ENCODE measurements at regions of chr2 and their contacts with region 1.

Region 1: GRCh38 chr2:203782262-203782976 is 76.0 kb downstream of the CD28 start:
- DNase-seq: peak; percentile 75 to 78
- H3K4me3 ChIP-seq: no peak overlapping the region
- H3K4me3 Mint-ChIP-seq: peak overlapping the region; percentile 37
- H3K27ac Mint-ChIP-seq: peak overlapping the region; percentile 96
- H3K4me1 ChIP-seq: peaks cover 44% of the 10 kb centered on the region
- H3K4me1 Mint-ChIP-seq: peaks cover 27% of the 10 kb centered on the region
- H3K27me3 ChIP-seq: no peaks in the 10 kb centered on the region
- H3K27me3 Mint-ChIP-seq: no peaks in the 10 kb centered on the region
- CTCF ChIP-seq: peak; percentile 68

Region 2: DNA sequence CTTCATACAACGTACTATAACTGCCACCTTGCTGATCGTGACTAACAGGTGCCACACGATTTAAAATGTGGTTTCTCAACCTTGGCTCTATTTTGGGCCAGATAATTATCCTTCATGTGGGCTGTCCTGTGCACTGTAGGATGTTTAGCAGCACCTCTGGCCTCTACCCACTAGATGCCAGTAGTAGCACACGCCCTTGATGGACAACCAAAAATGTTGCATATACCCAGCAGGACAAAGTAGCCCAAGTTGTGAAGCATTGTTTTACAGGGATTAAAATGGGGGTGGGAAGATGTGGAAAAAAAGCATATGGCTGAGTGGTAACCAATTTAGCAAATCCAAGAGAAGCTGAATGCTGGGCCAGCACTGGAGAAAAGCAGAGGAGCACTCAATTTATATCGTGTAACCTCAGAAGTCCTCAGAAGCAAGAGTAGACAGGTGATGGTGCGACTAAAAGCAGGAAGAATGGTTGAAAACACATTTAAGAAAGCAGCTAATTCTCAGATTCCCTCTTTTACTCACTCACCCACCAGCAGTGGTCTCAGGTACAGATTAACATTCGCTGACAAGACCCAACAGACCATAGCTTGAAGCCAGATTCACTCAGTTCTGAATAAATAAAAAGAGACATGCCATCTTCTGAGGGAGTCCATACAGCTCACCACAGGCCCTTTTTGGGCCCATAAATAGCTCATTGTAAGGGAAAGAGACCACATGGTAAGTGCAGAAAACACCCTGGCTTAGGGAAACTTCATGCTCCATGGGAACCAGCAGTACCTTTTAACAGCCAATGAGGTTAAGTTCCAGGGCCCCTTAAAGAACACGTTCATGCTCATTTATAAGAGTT is 297.9 kb before region 1 on chr2:
- CTCF ChIA-PET with region 1: no interaction called
- POLR2A ChIA-PET with region 1: no interaction called
- intact Hi-C with region 1: loop called (anchors 1 kb)
- DNase-seq: peak; percentile 39 to 41
- H3K4me3 ChIP-seq: no peak overlapping the region
- H3K4me3 Mint-ChIP-seq: no peak overlapping the region
- H3K27ac Mint-ChIP-seq: no peak overlapping the region
- H3K4me1 ChIP-seq: no peaks in the 10 kb centered on the region
- H3K4me1 Mint-ChIP-seq: no peaks in the 10 kb centered on the region
- H3K27me3 ChIP-seq: no peaks in the 10 kb centered on the region
- H3K27me3 Mint-ChIP-seq: no peaks in the 10 kb centered on the region
- CTCF ChIP-seq: peak; percentile 41 to 75

Region 3: DNA sequence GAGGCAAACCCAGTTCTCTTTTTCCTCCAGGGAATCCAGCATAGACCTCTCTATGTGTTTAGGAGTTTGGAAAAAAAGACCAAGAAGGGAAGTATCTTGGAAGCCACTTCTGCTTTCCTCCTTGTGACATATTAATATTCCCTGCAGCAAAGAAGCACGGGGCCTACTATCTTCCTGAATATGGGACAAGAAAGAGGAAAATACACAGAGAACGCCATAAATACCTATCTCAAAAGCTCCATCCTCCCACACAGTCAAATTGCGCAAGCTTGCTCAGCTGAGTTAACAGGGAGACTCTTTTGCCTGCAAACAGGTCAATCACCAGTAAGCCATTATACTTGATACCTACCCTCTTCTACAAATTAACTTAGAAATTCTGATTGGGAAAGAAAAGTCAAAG is 230.6 kb before region 1 on chr2:
- CTCF ChIA-PET with region 1: no interaction called
- POLR2A ChIA-PET with region 1: no interaction called
- intact Hi-C with region 1: loop called (anchors 5 kb)
- DNase-seq: peak; percentile 87 to 95
- H3K4me3 ChIP-seq: no peak overlapping the region
- H3K4me3 Mint-ChIP-seq: peak overlapping the region; percentile 57
- H3K27ac Mint-ChIP-seq: peak overlapping the region; percentile 55
- H3K4me1 ChIP-seq: peaks cover 26% of the 10 kb centered on the region
- H3K4me1 Mint-ChIP-seq: peaks cover 22% of the 10 kb centered on the region
- H3K27me3 ChIP-seq: no peaks in the 10 kb centered on the region
- H3K27me3 Mint-ChIP-seq: no peaks in the 10 kb centered on the region
- CTCF ChIP-seq: no peak

Region 4: DNA sequence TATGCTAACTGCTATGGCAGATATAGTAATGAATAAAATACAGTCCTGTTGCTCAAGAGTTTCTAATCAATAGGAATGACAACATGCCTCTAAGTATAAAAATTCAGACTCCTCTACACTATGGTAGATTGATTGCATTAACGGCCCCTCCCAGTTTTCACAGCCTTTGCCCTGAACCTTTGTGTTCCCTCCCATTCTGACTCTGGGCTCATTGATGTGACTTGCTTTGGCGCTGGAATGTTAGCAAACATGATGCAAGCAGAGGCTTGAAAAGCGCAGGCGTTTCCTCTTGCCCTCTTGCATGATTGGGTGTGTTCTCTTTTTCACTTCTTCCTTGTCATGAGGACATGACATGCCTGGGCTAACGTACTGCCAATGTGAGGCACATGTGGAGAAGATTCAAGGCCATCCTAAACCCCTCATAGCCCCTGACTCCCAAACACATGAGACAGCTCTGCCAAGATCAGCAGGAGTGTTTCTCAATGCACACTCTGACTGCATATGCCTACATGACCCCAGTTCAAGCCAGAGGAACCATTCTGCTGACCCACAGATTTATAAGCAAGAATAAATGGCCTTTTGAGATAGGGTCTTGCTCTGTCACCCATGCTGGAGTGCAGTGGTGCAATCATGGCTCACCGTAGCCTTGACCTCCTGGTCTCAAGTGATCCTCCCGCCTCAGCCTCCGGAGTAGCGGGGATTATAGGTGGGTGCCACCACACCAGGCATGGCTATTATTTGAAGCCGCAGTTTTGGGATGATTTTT is 125.7 kb before region 1 on chr2:
- CTCF ChIA-PET with region 1: interaction called, 4 read pairs
- POLR2A ChIA-PET with region 1: no interaction called
- intact Hi-C with region 1: loop called (anchors 1 kb)
- DNase-seq: peak; percentile 88 to 92
- H3K4me3 ChIP-seq: no peak overlapping the region
- H3K4me3 Mint-ChIP-seq: peak overlapping the region; percentile 5
- H3K27ac Mint-ChIP-seq: peak overlapping the region; percentile 85
- H3K4me1 ChIP-seq: peaks cover 52% of the 10 kb centered on the region
- H3K4me1 Mint-ChIP-seq: peaks cover 54% of the 10 kb centered on the region
- H3K27me3 ChIP-seq: no peaks in the 10 kb centered on the region
- H3K27me3 Mint-ChIP-seq: no peaks in the 10 kb centered on the region
- CTCF ChIP-seq: no peak

Region 5: GRCh38 chr2:203714106-203714505 is 68.3 kb before region 1 on chr2:
- CTCF ChIA-PET with region 1: no interaction called
- POLR2A ChIA-PET with region 1: interaction called, 3 read pairs
- intact Hi-C with region 1: loop called (anchors 1 kb)
- DNase-seq: peak; percentile 74 to 82
- H3K4me3 ChIP-seq: no peak overlapping the region
- H3K4me3 Mint-ChIP-seq: no peak overlapping the region
- H3K27ac Mint-ChIP-seq: peak overlapping the region; percentile 37
- H3K4me1 ChIP-seq: peaks cover 37% of the 10 kb centered on the region
- H3K4me1 Mint-ChIP-seq: peaks cover 31% of the 10 kb centered on the region
- H3K27me3 ChIP-seq: no peaks in the 10 kb centered on the region
- H3K27me3 Mint-ChIP-seq: no peaks in the 10 kb centered on the region
- CTCF ChIP-seq: no peak

Region 6: DNA sequence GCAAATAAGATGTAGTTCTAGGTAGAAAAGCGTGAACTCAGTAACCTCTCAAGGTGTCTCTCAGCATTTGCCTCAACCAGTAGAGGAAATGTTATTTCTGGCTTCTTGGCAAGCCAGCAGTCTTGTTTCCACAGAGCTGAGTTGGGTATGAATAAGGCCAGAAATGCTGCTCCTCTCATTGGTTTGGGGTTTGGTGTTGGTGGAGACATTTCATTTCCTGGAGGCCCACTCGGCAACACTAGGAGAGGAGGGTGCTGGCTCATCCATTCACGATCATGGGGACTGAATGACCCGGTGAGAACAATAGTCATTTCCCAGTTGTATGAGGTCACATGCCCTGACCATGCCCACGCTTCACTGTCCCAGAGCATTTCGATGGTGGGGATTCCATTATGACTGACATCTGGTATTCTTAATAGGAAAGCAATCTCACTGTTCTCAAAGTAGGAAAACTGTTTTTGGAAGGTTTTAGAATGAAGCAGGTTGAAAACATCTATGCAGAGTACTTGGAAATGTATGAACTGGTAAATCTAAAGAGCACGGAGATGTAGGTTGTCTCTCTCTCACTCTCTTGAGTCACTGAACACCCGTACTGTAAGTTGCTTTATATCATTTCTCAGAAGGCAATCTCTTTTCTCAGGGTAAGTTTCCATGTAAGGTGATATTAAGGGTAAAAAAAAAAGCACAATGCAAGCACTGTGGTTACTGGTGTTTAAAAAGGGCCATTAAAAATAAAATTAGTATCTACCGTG is 48.1 kb after region 1 on chr2:
- CTCF ChIA-PET with region 1: no interaction called
- POLR2A ChIA-PET with region 1: no interaction called
- intact Hi-C with region 1: no loop called
- DNase-seq: no peak
- H3K4me3 ChIP-seq: no peak overlapping the region
- H3K4me3 Mint-ChIP-seq: no peak overlapping the region
- H3K27ac Mint-ChIP-seq: no peak overlapping the region
- H3K4me1 ChIP-seq: no peaks in the 10 kb centered on the region
- H3K4me1 Mint-ChIP-seq: no peaks in the 10 kb centered on the region
- H3K27me3 ChIP-seq: no peaks in the 10 kb centered on the region
- H3K27me3 Mint-ChIP-seq: peaks cover 2% of the 10 kb centered on the region
- CTCF ChIP-seq: no peak

Measured in Caco-2 (cell line).